Common myeloid progenitor, CD34-positive (primary cell): ENCODE measurements at regions of chr17 and their contacts with region 1.

Region 1: DNA sequence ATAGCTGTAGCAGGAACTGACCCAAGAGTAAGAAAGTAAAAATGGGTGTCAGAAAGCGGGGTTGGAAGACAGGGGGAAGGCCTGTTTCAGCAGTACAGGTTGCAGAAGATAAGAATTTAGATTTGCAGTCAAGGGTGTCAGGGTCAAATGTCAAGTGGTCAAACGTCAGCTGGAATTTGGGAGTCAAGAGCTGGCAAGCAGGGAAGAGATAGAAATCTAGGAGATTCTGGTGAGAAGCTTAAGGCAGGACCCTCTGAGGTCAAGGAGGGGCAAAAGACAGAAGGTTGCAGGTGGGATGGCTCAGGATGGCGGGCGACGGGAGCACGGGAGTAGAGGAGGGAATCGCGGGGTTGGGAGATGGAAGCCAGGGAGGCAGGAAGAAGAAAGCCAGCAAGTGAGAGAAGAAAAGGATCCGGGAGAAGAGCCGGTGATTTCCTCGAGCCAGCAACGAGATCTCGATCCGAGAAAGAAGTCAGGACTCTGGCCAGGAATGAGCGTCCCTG is 335 bp downstream of the SLC25A35 start:
- DNase-seq: no peak
- H3K4me3 ChIP-seq: peak overlapping the region; percentile 75 to 88 (median 80)
- H3K27ac ChIP-seq: peak overlapping the region; percentile 15 to 90
- H3K4me1 ChIP-seq: peaks cover 0 to 26% (median 8%) of the 10 kb centered on the region in 4 experiments
- H3K27me3 ChIP-seq: no peaks in the 10 kb centered on the region

Region 2: GRCh38 chr17:8248751-8249607 is 45.9 kb before region 1 on chr17 and contains the start of gene PFAS:
- CTCF ChIA-PET with region 1: interaction called, 6 read pairs
- POLR2A ChIA-PET with region 1: interaction called, 10 read pairs
- DNase-seq: peak; percentile 95 to 97 (median 97)
- H3K4me3 ChIP-seq: peak within 1 kb of the TSS; percentile 91 to 99 (median 95)
- H3K27ac ChIP-seq: peak within 1 kb of the TSS; percentile 98
- H3K4me1 ChIP-seq: peaks cover 8 to 26% (median 22%) of the 10 kb centered on the region in 4 experiments
- H3K27me3 ChIP-seq: no peaks in the 10 kb centered on the region